HCT116 (cell line): ENCODE measurements at regions of chr6 and their contacts with region 1.

Region 1: DNA sequence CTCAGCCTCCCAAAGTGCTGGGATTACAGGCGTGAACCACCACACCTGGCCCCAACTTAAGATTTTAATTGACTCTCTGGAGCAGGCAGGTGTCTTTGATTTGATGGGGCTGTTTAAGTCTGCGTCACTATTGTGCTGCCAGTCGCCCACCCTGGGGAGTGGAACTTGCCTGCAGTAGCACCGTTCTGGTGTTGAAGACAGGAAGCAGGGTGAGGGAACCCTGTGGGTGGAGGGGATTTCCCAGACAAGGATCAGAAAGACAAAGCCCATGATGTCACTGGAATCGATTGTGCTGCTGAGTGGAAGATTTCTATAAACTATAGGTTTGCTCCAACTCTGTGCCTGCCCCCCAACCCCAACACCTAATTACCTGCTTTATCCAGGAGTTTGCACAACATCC is 11.0 kb downstream of the ALDH8A1 start:
- DNase-seq: no peak
- ATAC-seq: no peak
- H3K4me3 ChIP-seq: no peak overlapping the region
- H3K27ac ChIP-seq: no peak overlapping the region
- H3K4me1 ChIP-seq: no peaks in the 10 kb centered on the region
- H3K27me3 ChIP-seq: no peaks in the 10 kb centered on the region
- CTCF ChIP-seq: no peak
- POLR2A ChIP-seq: no peak
- RAD21 ChIP-seq: no peak

Region 2: DNA sequence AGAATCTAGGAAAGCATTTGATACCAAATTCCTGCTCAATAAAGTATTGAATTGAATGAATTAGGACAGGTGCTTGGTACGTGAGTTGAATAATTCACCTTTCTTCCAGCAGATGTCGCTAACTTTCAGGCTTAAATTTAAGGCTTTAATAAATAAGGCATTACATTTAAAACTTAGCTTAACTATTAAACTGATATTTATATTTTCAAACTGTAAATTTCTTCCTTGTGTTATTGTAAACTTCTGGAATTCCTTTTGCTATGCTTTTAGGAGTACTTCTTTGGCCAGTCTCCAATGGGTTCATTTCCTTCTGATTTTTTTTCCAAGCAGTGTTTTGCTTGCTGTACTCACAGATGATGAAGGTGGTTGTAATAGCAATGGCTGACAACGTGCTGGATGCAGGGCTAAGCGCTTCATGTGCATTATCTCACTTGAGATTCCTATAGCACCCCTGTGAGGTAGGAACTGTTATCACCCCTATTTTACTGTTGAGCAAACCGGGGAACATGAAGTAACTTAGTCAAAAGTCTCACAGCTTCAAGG is 815.2 kb before region 1 on chr6:
- CTCF ChIA-PET with region 1: interaction called, 13 read pairs
- POLR2A ChIA-PET with region 1: no interaction called
- RAD21 ChIA-PET with region 1: no interaction called
- intact Hi-C with region 1: no loop called
- DNase-seq: peak; percentile 94
- ATAC-seq: peak; percentile 100
- H3K4me3 ChIP-seq: peak overlapping the region in 1 of 2 experiments; percentile 10; a peak in 1 of 4 replicates
- H3K27ac ChIP-seq: no peak overlapping the region
- H3K4me1 ChIP-seq: peaks cover 0 to 7% of the 10 kb centered on the region in 2 experiments; a peak in 1 of 4 replicates
- H3K27me3 ChIP-seq: no peaks in the 10 kb centered on the region
- CTCF ChIP-seq: peak; percentile 54 to 79 (median 66); a peak in 5 of 6 replicates
- POLR2A ChIP-seq: no peak
- RAD21 ChIP-seq: peak; percentile 35

Region 3: DNA sequence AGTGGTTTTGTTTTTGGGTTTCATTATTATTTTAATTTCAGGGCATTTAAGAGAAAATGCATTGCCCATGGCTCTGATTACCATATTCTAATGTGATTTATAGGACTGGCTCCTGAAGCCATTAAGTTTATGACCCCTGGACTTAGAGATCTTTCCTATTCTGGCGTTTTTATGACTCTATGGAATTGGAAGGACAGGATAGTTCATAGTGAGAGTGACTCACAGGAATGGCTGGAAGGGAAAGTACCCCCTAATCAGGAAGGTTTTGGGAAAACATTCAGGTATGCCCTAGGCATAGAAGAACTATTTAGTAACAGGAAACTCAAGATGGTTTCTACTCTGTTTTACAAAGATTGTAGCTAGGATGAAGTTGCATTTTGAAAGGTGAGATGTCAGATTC is 777.9 kb before region 1 on chr6:
- CTCF ChIA-PET with region 1: interaction called, 13 read pairs
- POLR2A ChIA-PET with region 1: no interaction called
- RAD21 ChIA-PET with region 1: no interaction called
- intact Hi-C with region 1: loop called (anchors 1 kb)
- DNase-seq: no peak
- ATAC-seq: no peak
- H3K4me3 ChIP-seq: no peak overlapping the region
- H3K27ac ChIP-seq: no peak overlapping the region
- H3K4me1 ChIP-seq: no peaks in the 10 kb centered on the region
- H3K27me3 ChIP-seq: no peaks in the 10 kb centered on the region
- CTCF ChIP-seq: no peak
- POLR2A ChIP-seq: no peak
- RAD21 ChIP-seq: no peak

Region 4: GRCh38 chr6:134174672-134175198 is 764.2 kb before region 1 on chr6:
- CTCF ChIA-PET with region 1: interaction called, 22 read pairs
- POLR2A ChIA-PET with region 1: interaction called, 5 read pairs
- RAD21 ChIA-PET with region 1: interaction called in 1 of 2 experiments, 4 read pairs
- intact Hi-C with region 1: loop called (anchors 1 kb)
- DNase-seq: peak; percentile 73
- ATAC-seq: peak; percentile 77
- H3K4me3 ChIP-seq: peak overlapping the region; percentile 62 to 69
- H3K27ac ChIP-seq: peak overlapping the region; percentile 63
- H3K4me1 ChIP-seq: peaks cover 8 to 21% of the 10 kb centered on the region in 2 experiments
- H3K27me3 ChIP-seq: no peaks in the 10 kb centered on the region
- CTCF ChIP-seq: no peak
- POLR2A ChIP-seq: peak; percentile 95
- RAD21 ChIP-seq: peak; percentile 40

Region 5: DNA sequence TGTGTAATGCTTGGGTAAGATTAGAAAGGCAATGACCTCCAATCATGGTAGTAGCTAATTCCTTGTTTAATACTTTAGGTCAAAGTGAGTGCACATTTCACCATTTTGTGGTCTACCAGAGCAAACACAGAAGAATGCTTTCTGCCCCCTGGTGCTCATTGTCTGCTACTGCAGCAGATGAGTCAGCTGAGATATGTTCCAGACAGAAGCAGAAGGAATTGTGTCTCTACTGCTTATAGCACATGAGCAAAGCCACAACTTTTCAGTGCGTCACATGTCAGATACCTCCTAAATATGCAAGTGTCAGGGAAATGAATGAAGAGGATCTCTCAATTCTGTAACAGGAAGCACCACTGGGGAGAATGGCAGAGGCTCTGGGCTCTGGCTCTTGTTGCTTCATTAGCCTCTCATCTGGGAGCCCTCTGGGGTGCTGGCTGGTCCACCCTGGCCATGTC is 297.9 kb before region 1 on chr6:
- CTCF ChIA-PET with region 1: interaction called, 11 read pairs
- POLR2A ChIA-PET with region 1: no interaction called
- RAD21 ChIA-PET with region 1: interaction called in 1 of 2 experiments, 5 read pairs
- intact Hi-C with region 1: loop called (anchors 10 kb)
- DNase-seq: peak; percentile 58
- ATAC-seq: peak; percentile 79
- H3K4me3 ChIP-seq: no peak overlapping the region
- H3K27ac ChIP-seq: no peak overlapping the region
- H3K4me1 ChIP-seq: peaks cover 10 to 25% of the 10 kb centered on the region in 2 experiments; a peak in 3 of 4 replicates
- H3K27me3 ChIP-seq: no peaks in the 10 kb centered on the region
- CTCF ChIP-seq: peak; percentile 65 to 93 (median 86)
- POLR2A ChIP-seq: no peak
- RAD21 ChIP-seq: peak; percentile 87

Region 6: GRCh38 chr6:134822920-134823709 is 115.8 kb before region 1 on chr6:
- CTCF ChIA-PET with region 1: interaction called, 25 read pairs
- POLR2A ChIA-PET with region 1: no interaction called
- RAD21 ChIA-PET with region 1: interaction called in 1 of 2 experiments, 7 read pairs
- intact Hi-C with region 1: loop called (anchors 2 kb)
- DNase-seq: peak; percentile 86
- ATAC-seq: peak; percentile 99
- H3K4me3 ChIP-seq: no peak overlapping the region
- H3K27ac ChIP-seq: no peak overlapping the region
- H3K4me1 ChIP-seq: no peaks in the 10 kb centered on the region; a peak in 1 of 4 replicates
- H3K27me3 ChIP-seq: no peaks in the 10 kb centered on the region
- CTCF ChIP-seq: peak; percentile 83 to 97 (median 94)
- POLR2A ChIP-seq: no peak
- RAD21 ChIP-seq: peak; percentile 98

Region 7: GRCh38 chr6:134950482-134950881 is 11.6 kb after region 1 on chr6:
- CTCF ChIA-PET with region 1: interaction called, 28 read pairs
- POLR2A ChIA-PET with region 1: no interaction called
- RAD21 ChIA-PET with region 1: no interaction called
- intact Hi-C with region 1: no loop called
- DNase-seq: no peak
- ATAC-seq: no peak
- H3K4me3 ChIP-seq: no peak overlapping the region
- H3K27ac ChIP-seq: no peak overlapping the region
- H3K4me1 ChIP-seq: no peaks in the 10 kb centered on the region; a peak in 1 of 4 replicates
- H3K27me3 ChIP-seq: no peaks in the 10 kb centered on the region
- CTCF ChIP-seq: no peak
- POLR2A ChIP-seq: no peak
- RAD21 ChIP-seq: no peak